Motor neuron (in vitro differentiated cells): ENCODE measurements at regions of chr7 and their contacts with region 1.

Region 1: DNA sequence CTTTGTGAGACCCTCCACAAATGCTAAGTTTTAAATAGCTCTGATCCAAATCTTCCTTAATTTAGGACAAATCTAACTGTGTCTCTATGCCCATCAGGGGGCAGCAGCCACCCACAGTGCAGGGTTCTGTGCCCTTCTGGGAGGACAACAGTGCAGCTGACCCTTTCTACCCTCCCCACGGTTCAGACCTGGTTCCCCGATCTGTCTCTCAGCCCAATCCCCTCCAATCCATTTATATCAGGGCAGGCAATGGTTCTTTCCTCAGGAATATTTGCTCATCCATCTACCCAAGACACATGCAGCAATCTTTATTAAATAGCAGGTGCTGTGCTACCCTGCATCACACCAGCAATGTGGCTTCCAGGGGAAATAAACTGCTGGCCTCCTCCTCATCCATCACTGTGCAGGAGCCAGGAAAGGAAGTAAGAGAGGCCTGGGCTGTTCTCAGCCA is 4.0 kb upstream of the RBM28 start:
- ATAC-seq: peak; percentile 11 to 87 (median 82)
- H3K4me3 ChIP-seq: no peak overlapping the region
- H3K27ac ChIP-seq: peak overlapping the region; percentile 29 to 38
- H3K4me1 ChIP-seq: peaks cover 17 to 19% of the 10 kb centered on the region in 2 donors

Region 2: GRCh38 chr7:128381161-128381821 is 33.6 kb after region 1 on chr7:
- in situ Hi-C with region 1: loop called in 1 of 9 experiments (anchors 5 kb)
- ATAC-seq: peak in 7 of 8 experiments; percentile 16 to 86 (median 38)
- H3K4me3 ChIP-seq: no peak overlapping the region
- H3K27ac ChIP-seq: peak overlapping the region in 1 of 2 donors; percentile 3
- H3K4me1 ChIP-seq: peaks cover 10 to 11% of the 10 kb centered on the region in 2 donors